IMR-90 (cell line): ENCODE measurements at regions of chr4 and their contacts with region 1.

Region 1: DNA sequence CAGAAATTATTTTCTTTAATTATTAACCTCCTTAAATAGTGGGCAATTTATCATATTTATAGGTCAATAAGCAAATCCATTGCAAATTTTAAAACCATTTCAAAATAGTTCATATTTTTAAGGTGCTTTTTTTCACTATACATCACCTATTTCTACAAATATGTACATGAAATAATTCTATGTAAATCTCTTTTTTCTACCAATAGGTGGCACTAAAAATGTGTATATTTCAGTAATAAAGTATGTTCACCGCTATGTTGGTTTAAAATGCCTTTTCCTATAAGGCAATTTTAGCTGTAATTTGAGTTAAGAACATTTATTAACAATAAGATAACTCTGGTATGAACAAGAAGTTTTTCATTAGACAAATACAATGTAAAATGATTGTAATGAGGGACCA is 672.2 kb downstream of the KCTD8 start:
- DNase-seq: peak; percentile 1
- ATAC-seq: no peak
- H3K4me3 ChIP-seq: no peak overlapping the region
- H3K27ac ChIP-seq: no peak overlapping the region
- H3K4me1 ChIP-seq: no peaks in the 10 kb centered on the region
- H3K27me3 ChIP-seq: no peaks in the 10 kb centered on the region
- CTCF ChIP-seq: peak; percentile 32; the same call in 1 of the 2 replicates
- POLR2A ChIP-seq: no peak
- RAD21 ChIP-seq: peak; percentile 18; the same call in 1 of the 2 replicates

Region 2: DNA sequence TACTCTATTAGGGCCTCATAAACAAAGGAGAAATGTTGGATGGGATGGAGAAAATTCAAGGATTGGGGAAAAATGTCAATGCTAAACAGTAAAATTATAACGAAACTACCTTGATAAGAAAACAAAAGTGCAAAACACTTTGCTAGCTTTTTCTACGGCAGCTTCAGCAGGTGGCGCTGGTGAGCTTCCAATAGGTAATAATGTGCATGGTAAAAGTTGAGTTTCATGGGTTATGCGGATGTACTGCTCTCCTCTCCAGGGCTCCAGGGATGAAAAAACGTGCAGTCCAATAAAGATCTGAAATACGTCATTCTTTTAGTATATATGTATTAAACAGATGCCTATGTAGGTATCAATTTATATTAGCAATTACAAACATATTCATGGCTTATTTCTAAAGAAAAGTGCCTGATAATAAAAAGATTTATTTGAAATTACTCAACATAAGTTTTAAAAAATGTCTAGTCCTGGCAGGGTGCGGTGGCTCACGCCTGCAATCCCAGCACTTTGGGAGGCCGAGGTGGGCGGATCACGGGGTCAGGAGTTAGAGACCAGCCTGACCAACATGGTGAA is 644.3 kb before region 1 on chr4:
- CTCF ChIA-PET with region 1: no interaction called
- POLR2A ChIA-PET with region 1: no interaction called
- dilution Hi-C with region 1: no loop called
- in situ Hi-C with region 1: no loop called
- intact Hi-C with region 1: loop called (anchors 10 kb)
- DNase-seq: peak; percentile 66
- ATAC-seq: peak; percentile 56; the same call in 1 of the 2 replicates
- H3K4me3 ChIP-seq: no peak overlapping the region
- H3K27ac ChIP-seq: no peak overlapping the region
- H3K4me1 ChIP-seq: no peaks in the 10 kb centered on the region
- H3K27me3 ChIP-seq: no peaks in the 10 kb centered on the region
- CTCF ChIP-seq: peak; percentile 90
- POLR2A ChIP-seq: 0 out of 2 replicates have a peak, but pooled peaks have one; percentile 44
- RAD21 ChIP-seq: peak; percentile 93

Region 3: GRCh38 chr4:43277003-43277402 is 499.4 kb before region 1 on chr4:
- CTCF ChIA-PET with region 1: no interaction called
- POLR2A ChIA-PET with region 1: no interaction called
- dilution Hi-C with region 1: no loop called
- in situ Hi-C with region 1: no loop called
- intact Hi-C with region 1: no loop called
- DNase-seq: peak; percentile 69
- ATAC-seq: peak; percentile 66
- H3K4me3 ChIP-seq: no peak overlapping the region
- H3K27ac ChIP-seq: no peak overlapping the region
- H3K4me1 ChIP-seq: no peaks in the 10 kb centered on the region
- H3K27me3 ChIP-seq: no peaks in the 10 kb centered on the region
- CTCF ChIP-seq: no peak
- POLR2A ChIP-seq: no peak
- RAD21 ChIP-seq: no peak